BJ (cell line): ENCODE measurements at regions of chr11 and their contacts with region 1.

Region 1: GRCh38 chr11:76919887-76920746 is 59.4 kb downstream of the ACER3 start:
- DNase-seq: no peak
- H3K4me3 ChIP-seq: no peak overlapping the region
- H3K27me3 ChIP-seq: no peaks in the 10 kb centered on the region
- CTCF ChIP-seq: peak; percentile 93

Region 2: GRCh38 chr11:76734456-76735420 is 185.4 kb before region 1 on chr11:
- CTCF ChIA-PET with region 1: interaction called, 127 read pairs
- POLR2A ChIA-PET with region 1: no interaction called
- DNase-seq: no peak
- H3K4me3 ChIP-seq: no peak overlapping the region
- H3K27me3 ChIP-seq: peaks cover 7% of the 10 kb centered on the region
- CTCF ChIP-seq: no peak

Region 3: DNA sequence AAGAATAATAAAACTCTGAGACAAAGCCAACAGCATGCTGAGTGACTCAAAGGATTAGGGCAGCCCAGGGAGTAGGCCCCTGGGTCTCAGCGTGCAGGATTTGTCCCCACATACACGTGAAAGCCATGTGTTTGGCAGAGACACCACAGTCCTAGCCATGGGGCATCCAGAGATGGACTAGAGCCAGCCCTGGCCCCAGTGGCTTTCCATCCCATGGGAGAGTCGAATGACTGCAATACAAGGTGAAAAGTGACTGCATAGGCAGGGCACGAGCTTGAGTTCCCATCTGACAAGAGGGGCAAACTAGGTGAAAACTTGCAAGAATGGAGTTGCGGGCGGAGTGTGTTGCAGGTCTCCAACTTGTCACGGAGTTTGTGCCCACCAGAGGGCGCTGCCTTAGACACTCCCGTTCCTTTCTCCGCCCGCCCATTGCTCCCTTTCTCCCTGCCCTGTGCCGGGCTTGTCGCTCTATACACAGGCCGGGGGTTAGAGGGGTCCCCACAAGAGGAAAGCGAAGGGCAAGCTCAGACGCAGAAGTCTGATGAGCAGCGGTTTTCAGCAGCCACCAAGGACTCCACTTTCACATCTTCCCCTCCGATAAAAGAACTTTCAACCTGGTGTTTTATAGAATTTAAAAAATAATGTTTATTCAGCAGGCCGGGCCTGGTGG is 112.8 kb before region 1 on chr11:
- CTCF ChIA-PET with region 1: interaction called, 200 read pairs
- POLR2A ChIA-PET with region 1: no interaction called
- DNase-seq: no peak
- H3K4me3 ChIP-seq: no peak overlapping the region
- H3K27me3 ChIP-seq: no peaks in the 10 kb centered on the region
- CTCF ChIP-seq: peak; percentile 80

Region 4: GRCh38 chr11:76902121-76903014 is 17.7 kb before region 1 on chr11:
- CTCF ChIA-PET with region 1: interaction called, 29 read pairs
- POLR2A ChIA-PET with region 1: no interaction called
- DNase-seq: no peak
- H3K4me3 ChIP-seq: no peak overlapping the region
- H3K27me3 ChIP-seq: no peaks in the 10 kb centered on the region
- CTCF ChIP-seq: no peak

Region 5: GRCh38 chr11:77039491-77040400 is 119.6 kb after region 1 on chr11:
- CTCF ChIA-PET with region 1: interaction called, 38 read pairs
- POLR2A ChIA-PET with region 1: no interaction called
- DNase-seq: no peak
- H3K4me3 ChIP-seq: peak overlapping the region; percentile 38
- H3K27me3 ChIP-seq: peaks cover 7% of the 10 kb centered on the region
- CTCF ChIP-seq: peak; percentile 69

Region 6: GRCh38 chr11:77091146-77091940 is 171.2 kb after region 1 on chr11:
- CTCF ChIA-PET with region 1: interaction called, 13 read pairs
- POLR2A ChIA-PET with region 1: no interaction called
- DNase-seq: no peak
- H3K4me3 ChIP-seq: no peak overlapping the region
- H3K27me3 ChIP-seq: no peaks in the 10 kb centered on the region
- CTCF ChIP-seq: peak; percentile 93